ENCODE measurements at regions of chr2 and their contacts with region 1.

Region 1: DNA sequence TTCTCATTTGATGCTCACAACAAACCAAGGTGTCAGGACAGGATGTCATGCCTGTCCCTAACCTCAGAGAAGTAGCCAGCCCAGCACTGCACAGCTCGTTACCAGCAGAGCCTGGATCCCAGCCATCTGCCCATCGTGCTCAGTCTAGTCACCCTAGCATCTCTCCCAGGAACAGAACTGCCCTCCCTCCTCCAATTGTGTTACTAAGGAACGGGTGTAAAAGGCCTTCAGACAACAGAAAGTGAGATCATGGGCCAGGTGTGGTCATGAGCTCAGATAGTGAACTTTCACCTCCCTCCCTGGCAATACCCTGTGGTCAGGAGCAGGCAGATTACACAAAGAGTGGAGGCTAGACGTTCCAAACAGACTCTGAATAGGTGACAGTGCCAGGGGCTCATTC is 111.8 kb upstream of the PPP1CB start:
- DNase-seq: no peak
- H3K4me3 ChIP-seq: no peak overlapping the region
- H3K27ac ChIP-seq: peak overlapping the region; percentile 94 to 98
- H3K4me1 ChIP-seq: peaks cover 30 to 49% of the 10 kb centered on the region in 2 donors
- H3K27me3 ChIP-seq: no peaks in the 10 kb centered on the region
- CTCF ChIP-seq: no peak

Region 2: DNA sequence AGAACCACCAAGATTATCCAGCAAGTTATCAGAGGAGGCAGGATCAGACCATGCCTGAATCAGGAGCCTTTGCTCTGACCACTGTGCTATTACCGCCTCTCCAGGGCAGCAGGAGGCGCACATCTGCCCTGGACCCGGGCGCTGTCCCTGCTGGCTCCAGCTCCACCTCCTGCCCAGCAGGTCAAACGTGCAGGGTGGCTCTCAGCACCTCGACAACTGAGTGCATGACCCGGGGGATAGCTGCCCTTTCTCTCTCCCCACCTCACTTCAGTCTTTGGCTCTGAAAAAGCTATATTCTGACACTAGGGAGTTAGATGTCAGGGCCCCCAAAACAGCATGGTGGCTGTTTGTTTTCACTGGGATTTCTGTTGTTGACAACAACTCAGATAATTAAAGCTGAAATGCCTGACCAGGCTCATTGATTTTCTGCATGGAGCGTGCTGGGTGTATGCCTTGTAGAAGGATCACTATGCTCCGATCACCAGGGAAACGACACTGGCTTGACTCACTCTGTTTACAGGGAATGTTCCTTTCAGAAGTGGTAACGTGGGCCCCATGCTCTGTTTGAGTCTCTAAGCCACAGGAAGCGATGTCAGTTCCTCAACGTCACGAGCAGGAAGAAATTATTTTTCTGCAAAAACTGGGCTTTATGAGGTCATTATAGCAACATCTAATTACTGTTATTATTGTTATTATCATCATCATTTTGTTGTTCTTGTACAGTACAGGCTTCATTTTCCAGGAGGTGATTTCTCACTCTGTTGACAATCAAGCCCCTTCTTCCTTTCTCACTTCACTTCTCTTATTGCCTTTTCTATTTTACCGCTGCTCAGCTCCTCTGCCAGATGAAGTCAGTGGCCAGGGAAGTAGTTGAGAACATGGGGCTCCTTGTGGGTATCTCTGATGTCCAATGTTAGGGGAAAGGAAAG is 18.4 kb before region 1 on chr2:
- intact Hi-C with region 1: loop called (anchors 2 kb)
- DNase-seq: peak; percentile 86 to 97
- H3K4me3 ChIP-seq: peak overlapping the region in 1 of 2 donors; percentile 8
- H3K27ac ChIP-seq: peak overlapping the region; percentile 94 to 100
- H3K4me1 ChIP-seq: peaks cover 34 to 65% of the 10 kb centered on the region in 2 donors
- H3K27me3 ChIP-seq: no peaks in the 10 kb centered on the region
- CTCF ChIP-seq: no peak

Region 3: DNA sequence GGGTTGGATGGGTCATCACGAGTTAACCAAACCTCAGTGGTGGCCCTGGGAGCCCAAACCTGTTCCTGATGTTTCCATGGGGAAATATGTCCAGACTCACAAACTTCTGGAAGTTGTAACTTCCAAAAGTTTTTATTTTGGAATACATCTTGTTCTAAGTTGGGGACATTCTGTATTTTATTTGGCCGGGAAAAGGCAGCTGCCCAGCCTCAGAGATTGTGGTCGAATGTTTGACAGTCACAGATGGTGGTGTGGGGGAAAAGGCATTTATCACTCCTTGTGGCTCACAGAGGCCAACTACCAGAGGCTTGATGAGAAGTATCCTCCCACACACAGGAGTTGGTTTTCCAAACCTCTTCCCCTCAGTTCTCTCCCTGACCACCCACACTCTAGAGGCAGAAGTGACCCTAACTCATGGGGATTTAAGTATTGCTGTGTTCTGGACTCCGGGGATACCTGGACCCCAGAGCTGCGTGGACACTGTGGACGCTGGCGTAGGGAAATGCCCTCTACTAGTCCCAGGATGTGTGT is 12.9 kb before region 1 on chr2:
- intact Hi-C with region 1: loop called (anchors 1 kb)
- DNase-seq: peak; percentile 60 to 93
- H3K4me3 ChIP-seq: no peak overlapping the region
- H3K27ac ChIP-seq: peak overlapping the region; percentile 94 to 100
- H3K4me1 ChIP-seq: peaks cover 40 to 76% of the 10 kb centered on the region in 2 donors
- H3K27me3 ChIP-seq: no peaks in the 10 kb centered on the region
- CTCF ChIP-seq: no peak

Measured in ascending aorta (tissue), 2 donors.